Activated naive CD4-positive, alpha-beta T cell treated with anti-CD3 and anti-CD28 coated beads for 36 hours (primary cell): ENCODE measurements at regions of chr13 and their contacts with region 1.

Region 1: DNA sequence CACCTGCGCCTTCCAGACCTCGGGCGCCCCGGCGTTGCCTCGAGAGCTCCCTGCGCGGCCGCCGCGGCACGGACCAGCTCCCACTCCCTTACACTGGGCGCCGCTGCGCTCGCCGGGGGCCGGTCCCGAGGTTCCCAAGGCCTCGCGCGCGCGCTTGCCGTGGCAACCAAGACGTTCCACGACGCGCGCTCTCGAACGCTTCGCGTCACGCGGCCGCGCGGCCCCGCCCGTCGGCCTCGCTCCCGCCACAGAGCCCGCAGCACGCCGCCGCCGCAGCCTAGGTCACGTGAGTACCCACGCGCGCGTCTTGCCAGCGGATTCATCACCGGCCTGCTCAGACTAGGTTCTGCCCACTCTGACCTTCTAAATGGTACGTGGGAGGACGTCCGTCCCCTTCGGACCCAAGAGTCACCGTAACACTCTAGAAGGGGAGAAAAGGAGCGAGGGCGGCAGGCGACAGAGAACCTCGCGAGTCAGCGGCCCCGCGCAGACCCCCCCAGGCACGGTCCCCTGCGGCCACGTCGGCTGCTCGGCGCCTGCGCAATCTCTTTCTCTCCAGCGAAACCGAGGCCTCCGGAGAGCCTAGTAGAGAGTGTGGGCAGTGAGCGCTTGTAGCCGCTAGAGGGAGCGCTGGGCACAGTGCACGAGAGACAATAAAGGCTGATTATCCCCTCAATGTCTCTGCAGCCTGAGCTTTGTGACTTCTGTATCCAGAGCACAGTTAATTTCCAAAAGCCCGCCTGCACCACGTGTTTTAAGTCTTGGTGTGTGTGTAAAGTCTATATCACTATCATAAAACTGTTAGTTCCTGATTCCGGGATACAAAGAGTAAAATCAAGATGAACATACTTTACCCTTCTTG is at the start of gene SPART:
- DNase-seq: peak; percentile 93
- H3K4me3 Mint-ChIP-seq: peak within 1 kb of the TSS; percentile 86
- H3K27ac Mint-ChIP-seq: peak within 1 kb of the TSS; percentile 90
- H3K4me1 Mint-ChIP-seq: peaks cover 26% of the 10 kb centered on the region
- H3K27me3 Mint-ChIP-seq: no peaks in the 10 kb centered on the region
- total RNA-seq, gene SPART: 12.5 to 17.0 TPM

Region 2: GRCh38 chr13:36297366-36298338 is 48.8 kb before region 1 on chr13 and contains the start of gene CCDC169:
- CTCF ChIA-PET with region 1: interaction called, 3 read pairs
- intact Hi-C with region 1: loop called (anchors 1 kb)
- DNase-seq: peak; percentile 78
- H3K4me3 Mint-ChIP-seq: peak within 1 kb of the TSS; percentile 86
- H3K27ac Mint-ChIP-seq: no peak within 1 kb of the TSS
- H3K4me1 Mint-ChIP-seq: peaks cover 15% of the 10 kb centered on the region
- H3K27me3 Mint-ChIP-seq: peaks cover 31% of the 10 kb centered on the region
- total RNA-seq, gene CCDC169: 0.50 to 1.0 TPM

Region 3: GRCh38 chr13:36332986-36333385 is 13.5 kb before region 1 on chr13:
- CTCF ChIA-PET with region 1: no interaction called
- intact Hi-C with region 1: no loop called
- DNase-seq: no peak
- H3K4me3 Mint-ChIP-seq: no peak overlapping the region
- H3K27ac Mint-ChIP-seq: no peak overlapping the region
- H3K4me1 Mint-ChIP-seq: peaks cover 45% of the 10 kb centered on the region
- H3K27me3 Mint-ChIP-seq: no peaks in the 10 kb centered on the region

Region 4: DNA sequence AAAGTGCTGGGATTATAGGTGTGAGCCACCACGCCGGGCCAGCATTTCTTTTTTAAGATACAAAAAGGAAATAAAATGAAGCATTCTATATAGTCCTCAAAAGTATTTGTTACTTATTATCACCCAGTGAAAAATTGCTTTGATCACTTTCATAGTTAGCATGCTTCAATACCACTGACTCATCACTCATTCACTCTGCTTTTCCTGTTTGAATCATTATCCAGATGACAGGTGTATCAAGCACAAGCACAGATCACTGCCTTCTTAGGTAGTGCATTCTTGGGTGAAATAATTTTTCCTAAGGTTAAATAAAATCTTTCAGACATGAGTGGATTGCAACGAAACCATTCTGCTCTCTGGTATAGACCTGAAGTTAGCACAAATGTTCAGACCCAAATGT is 35.6 kb after region 1 on chr13:
- CTCF ChIA-PET with region 1: interaction called, 3 read pairs
- intact Hi-C with region 1: loop called (anchors 2 kb)
- DNase-seq: no peak
- H3K4me3 Mint-ChIP-seq: no peak overlapping the region
- H3K27ac Mint-ChIP-seq: no peak overlapping the region
- H3K4me1 Mint-ChIP-seq: no peaks in the 10 kb centered on the region
- H3K27me3 Mint-ChIP-seq: peaks cover 13% of the 10 kb centered on the region

Region 5: GRCh38 chr13:36420437-36420891 is 74.0 kb after region 1 on chr13:
- CTCF ChIA-PET with region 1: interaction called, 3 read pairs
- intact Hi-C with region 1: loop called (anchors 1 kb)
- DNase-seq: peak; percentile 85
- H3K4me3 Mint-ChIP-seq: no peak overlapping the region
- H3K27ac Mint-ChIP-seq: peak overlapping the region; percentile 8
- H3K4me1 Mint-ChIP-seq: peaks cover 13% of the 10 kb centered on the region
- H3K27me3 Mint-ChIP-seq: peaks cover 60% of the 10 kb centered on the region

Region 6: DNA sequence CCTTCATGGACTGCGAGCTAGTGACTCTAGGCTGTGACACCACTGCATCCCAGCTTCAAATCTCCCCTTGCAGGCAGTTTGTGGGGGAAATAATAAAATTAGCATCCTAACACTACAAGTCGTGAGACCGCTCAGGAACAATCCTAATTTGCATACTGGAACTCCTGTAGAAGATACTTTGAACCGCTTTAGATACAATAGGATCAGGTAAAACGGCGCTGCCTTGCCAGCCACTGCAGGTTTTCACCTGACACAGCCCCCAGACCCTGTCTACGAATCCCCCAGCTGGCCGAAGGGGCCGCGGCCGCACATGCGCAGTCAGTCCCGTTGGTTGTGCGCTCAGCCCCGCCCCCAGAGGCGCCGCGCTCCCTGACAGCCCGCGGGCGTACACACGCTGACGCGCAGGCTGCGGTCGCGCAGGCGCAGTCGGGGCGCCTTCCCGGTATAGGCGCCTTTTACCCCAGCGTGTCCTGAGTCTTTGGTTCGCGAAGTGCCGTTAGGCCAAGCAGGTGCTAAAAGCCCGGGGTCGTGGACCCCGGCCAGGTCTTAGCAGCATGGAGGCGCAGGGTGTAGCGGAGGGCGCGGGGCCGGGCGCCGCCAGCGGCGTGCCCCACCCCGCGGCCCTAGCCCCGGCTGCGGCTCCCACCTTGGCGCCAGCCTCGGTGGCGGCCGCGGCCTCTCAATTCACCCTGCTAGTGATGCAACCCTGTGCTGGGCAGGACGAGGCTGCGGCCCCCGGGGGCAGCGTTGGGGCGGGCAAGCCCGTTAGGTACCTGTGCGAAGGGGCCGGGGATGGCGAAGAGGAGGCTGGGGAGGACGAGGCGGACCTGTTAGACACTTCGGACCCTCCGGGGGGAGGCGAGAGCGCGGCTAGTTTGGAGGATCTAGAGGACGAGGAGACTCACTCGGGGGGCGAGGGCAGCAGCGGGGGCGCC is 472.6 kb after region 1 on chr13 and contains the start of gene RFXAP:
- CTCF ChIA-PET with region 1: no interaction called
- intact Hi-C with region 1: loop called (anchors 1 kb)
- DNase-seq: peak; percentile 89
- H3K4me3 Mint-ChIP-seq: peak within 1 kb of the TSS; percentile 93
- H3K27ac Mint-ChIP-seq: peak within 1 kb of the TSS; percentile 75
- H3K4me1 Mint-ChIP-seq: peaks cover 45% of the 10 kb centered on the region
- H3K27me3 Mint-ChIP-seq: peaks cover 8% of the 10 kb centered on the region
- total RNA-seq, gene RFXAP: 9.2 to 12.2 TPM

Region 7: GRCh38 chr13:36862002-36862685 is 515.7 kb after region 1 on chr13:
- CTCF ChIA-PET with region 1: no interaction called
- intact Hi-C with region 1: no loop called
- DNase-seq: no peak
- H3K4me3 Mint-ChIP-seq: no peak overlapping the region
- H3K27ac Mint-ChIP-seq: no peak overlapping the region
- H3K4me1 Mint-ChIP-seq: peaks cover 2% of the 10 kb centered on the region
- H3K27me3 Mint-ChIP-seq: peaks cover 23% of the 10 kb centered on the region

Region 8: GRCh38 chr13:36999054-36999714 is 652.7 kb after region 1 on chr13 and contains the start of gene ALG5:
- CTCF ChIA-PET with region 1: interaction called, 5 read pairs
- intact Hi-C with region 1: loop called (anchors 1 kb)
- DNase-seq: peak; percentile 90
- H3K4me3 Mint-ChIP-seq: peak within 1 kb of the TSS; percentile 100
- H3K27ac Mint-ChIP-seq: peak within 1 kb of the TSS; percentile 100
- H3K4me1 Mint-ChIP-seq: peaks cover 41% of the 10 kb centered on the region
- H3K27me3 Mint-ChIP-seq: no peaks in the 10 kb centered on the region
- total RNA-seq, gene ALG5: 17.5 to 20.8 TPM